GM12878 (cell line): ENCODE measurements at regions of chr1 and their contacts with region 1.

Region 1: DNA sequence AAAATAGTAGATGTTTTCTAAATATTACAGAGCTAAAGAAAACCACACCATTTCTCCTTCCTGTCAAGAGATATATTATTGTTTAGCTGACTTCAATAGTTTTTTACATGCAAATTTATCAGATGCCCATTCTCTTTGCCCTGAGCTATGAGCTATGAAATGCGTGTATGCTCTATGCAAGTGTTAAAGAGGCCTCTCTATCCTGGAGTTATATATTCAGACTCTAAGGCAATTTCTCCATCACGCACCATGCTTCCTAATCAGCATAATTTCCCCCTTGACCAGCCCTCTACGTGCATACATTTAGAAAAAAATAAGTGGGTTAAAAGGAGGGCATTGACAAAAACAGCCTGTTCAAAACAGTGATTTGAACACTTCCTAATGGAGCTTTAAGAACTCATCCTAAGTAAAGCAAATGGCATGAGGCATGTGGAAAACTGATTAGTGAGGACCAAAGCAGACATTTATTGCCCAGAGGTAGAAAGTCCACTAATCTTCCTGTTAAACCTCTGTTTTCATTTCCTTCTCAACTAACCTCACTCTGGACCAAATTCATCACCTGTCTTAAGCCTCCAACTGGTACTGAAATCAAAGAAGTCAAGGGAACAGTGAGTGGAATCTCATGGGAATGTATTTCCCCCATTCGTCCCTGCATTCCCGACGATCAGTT is 565.8 kb upstream of the PKN2 start:
- DNase-seq: no peak
- ATAC-seq: peak; percentile 47
- H3K4me3 ChIP-seq: no peak overlapping the region
- H3K27ac ChIP-seq: no peak overlapping the region
- H3K4me1 ChIP-seq: no peaks in the 10 kb centered on the region
- H3K27me3 ChIP-seq: no peaks in the 10 kb centered on the region
- CTCF ChIP-seq: no peak
- EP300 ChIP-seq: no peak
- POLR2A ChIP-seq: no peak
- RAD21 ChIP-seq: no peak

Region 2: DNA sequence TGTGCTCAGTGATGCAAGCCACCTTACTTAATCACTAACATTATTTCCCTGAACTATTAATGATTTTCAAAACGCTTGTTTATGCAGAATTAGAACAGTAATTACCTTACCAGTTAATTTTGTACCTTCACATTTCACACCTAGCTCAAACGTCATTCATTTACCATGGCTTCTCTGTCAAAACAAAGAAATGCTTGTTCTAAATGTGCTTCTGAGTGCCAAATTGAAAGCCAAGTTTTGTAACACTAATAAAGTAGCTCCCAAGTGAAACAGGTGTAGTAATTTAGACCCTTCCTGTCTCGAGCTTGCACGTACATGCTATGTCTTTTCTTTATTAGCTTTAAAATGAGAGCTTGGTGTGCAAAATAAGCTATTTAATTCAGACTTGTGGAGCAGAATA is 32.0 kb after region 1 on chr1:
- CTCF ChIA-PET with region 1: interaction called, 4 read pairs
- POLR2A ChIA-PET with region 1: interaction called, 5 read pairs
- RAD21 ChIA-PET with region 1: interaction called, 15 read pairs
- SMC1A ChIA-PET with region 1: interaction called, 12 read pairs
- in situ Hi-C with region 1: no loop called
- intact Hi-C with region 1: no loop called
- DNase-seq: peak; percentile 33
- ATAC-seq: peak; percentile 79
- H3K4me3 ChIP-seq: no peak overlapping the region
- H3K27ac ChIP-seq: no peak overlapping the region
- H3K4me1 ChIP-seq: no peaks in the 10 kb centered on the region
- H3K27me3 ChIP-seq: no peaks in the 10 kb centered on the region
- CTCF ChIP-seq: no peak
- EP300 ChIP-seq: peak; percentile 91 to 96; a peak in 3 of 4 replicates
- POLR2A ChIP-seq: no peak
- RAD21 ChIP-seq: no peak